ENCODE measurements at regions of chr17 and their contacts with region 1.

Region 1: GRCh38 chr17:63984651-63985386 is 12.1 kb upstream of the SCN4A start:
- DNase-seq: peak; percentile 52 to 76
- ATAC-seq: peak; percentile 65 to 88 (median 81)
- H3K4me3 ChIP-seq: no peak overlapping the region
- H3K27ac ChIP-seq: peak overlapping the region; percentile 44 to 88 (median 78)
- H3K4me1 ChIP-seq: peaks cover 24 to 86% (median 61%) of the 10 kb centered on the region in 9 donors
- H3K27me3 ChIP-seq: peaks cover 0 to 3% (median 0%) of the 10 kb centered on the region in 7 donors
- CTCF ChIP-seq: peak in 1 of 9 donors; percentile 6

Region 2: GRCh38 chr17:63931099-63931561 is 53.7 kb before region 1 on chr17:
- intact Hi-C with region 1: loop called in 4 of 10 experiments (anchors 5 kb)
- DNase-seq: peak; percentile 77 to 84
- ATAC-seq: peak; percentile 85 to 96 (median 89)
- H3K4me3 ChIP-seq: peak overlapping the region in 9 of 10 donors; percentile 13 to 48 (median 39)
- H3K27ac ChIP-seq: peak overlapping the region; percentile 65 to 88 (median 76)
- H3K4me1 ChIP-seq: peaks cover 0 to 30% (median 24%) of the 10 kb centered on the region in 9 donors
- H3K27me3 ChIP-seq: peaks cover 0 to 2% (median 0%) of the 10 kb centered on the region in 7 donors
- CTCF ChIP-seq: no peak

Region 3: GRCh38 chr17:63946440-63947367 is 38.1 kb before region 1 on chr17:
- intact Hi-C with region 1: loop called in 5 of 10 experiments (anchors 5 kb)
- DNase-seq: peak; percentile 35 to 54
- ATAC-seq: peak in 7 of 8 donors; percentile 70 to 81 (median 77)
- H3K4me3 ChIP-seq: no peak overlapping the region
- H3K27ac ChIP-seq: peak overlapping the region in 2 of 10 donors; percentile 29 to 36
- H3K4me1 ChIP-seq: peaks cover 0 to 20% (median 2%) of the 10 kb centered on the region in 9 donors
- H3K27me3 ChIP-seq: peaks cover 0 to 7% (median 0%) of the 10 kb centered on the region in 7 donors
- CTCF ChIP-seq: peak; percentile 64 to 89 (median 83)

Region 4: DNA sequence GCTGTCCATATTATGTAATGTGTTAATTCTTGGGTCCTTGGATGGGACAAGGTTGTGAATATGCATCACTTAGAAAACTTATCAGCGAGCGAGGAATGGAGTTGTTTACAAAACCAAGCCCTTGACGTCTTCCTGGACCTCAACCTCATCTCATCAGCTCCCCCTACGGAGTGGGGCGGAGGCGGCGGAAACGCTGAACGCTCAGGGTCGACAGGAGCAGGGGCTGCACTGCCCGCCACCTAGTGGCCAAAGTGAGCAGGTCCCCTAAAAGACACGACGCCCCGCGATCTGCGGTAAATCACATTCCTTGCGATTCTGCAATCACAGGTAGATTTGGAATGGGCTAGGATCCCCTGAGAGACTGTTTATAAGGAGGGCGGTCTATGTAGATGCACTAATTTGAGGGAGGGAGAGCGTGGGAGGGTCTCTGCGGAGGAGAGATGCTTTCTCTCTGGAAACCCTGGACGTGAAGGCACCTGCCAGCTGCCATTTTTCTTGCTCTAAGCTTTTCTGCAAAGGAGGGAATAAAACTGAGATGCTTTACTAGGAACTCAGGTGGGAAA is 41.0 kb after region 1 on chr17:
- intact Hi-C with region 1: loop called in 1 of 10 experiments (anchors 5 kb)
- DNase-seq: peak; percentile 80 to 81
- ATAC-seq: peak in 7 of 8 donors; percentile 69 to 85 (median 82)
- H3K4me3 ChIP-seq: peak overlapping the region in 5 of 10 donors; percentile 14 to 32 (median 26)
- H3K27ac ChIP-seq: peak overlapping the region in 7 of 10 donors; percentile 4 to 97 (median 66)
- H3K4me1 ChIP-seq: peaks cover 4 to 31% (median 20%) of the 10 kb centered on the region in 9 donors
- H3K27me3 ChIP-seq: no peaks in the 10 kb centered on the region
- CTCF ChIP-seq: peak; percentile 88 to 97 (median 95)